Right cardiac atrium (tissue), 5 donors: ENCODE measurements at regions of chr10 and their contacts with region 1.

Region 1: GRCh38 chr10:31133628-31134302 is 102.1 kb upstream of the ZNF438 start:
- DNase-seq: peak; percentile 86 to 96 (median 94)
- ATAC-seq: peak; percentile 94 to 95
- H3K4me3 ChIP-seq: peak overlapping the region; percentile 65
- H3K27ac ChIP-seq: peak overlapping the region; percentile 95
- H3K4me1 ChIP-seq: peaks cover 5% of the 10 kb centered on the region
- H3K27me3 ChIP-seq: no peaks in the 10 kb centered on the region

Region 2: DNA sequence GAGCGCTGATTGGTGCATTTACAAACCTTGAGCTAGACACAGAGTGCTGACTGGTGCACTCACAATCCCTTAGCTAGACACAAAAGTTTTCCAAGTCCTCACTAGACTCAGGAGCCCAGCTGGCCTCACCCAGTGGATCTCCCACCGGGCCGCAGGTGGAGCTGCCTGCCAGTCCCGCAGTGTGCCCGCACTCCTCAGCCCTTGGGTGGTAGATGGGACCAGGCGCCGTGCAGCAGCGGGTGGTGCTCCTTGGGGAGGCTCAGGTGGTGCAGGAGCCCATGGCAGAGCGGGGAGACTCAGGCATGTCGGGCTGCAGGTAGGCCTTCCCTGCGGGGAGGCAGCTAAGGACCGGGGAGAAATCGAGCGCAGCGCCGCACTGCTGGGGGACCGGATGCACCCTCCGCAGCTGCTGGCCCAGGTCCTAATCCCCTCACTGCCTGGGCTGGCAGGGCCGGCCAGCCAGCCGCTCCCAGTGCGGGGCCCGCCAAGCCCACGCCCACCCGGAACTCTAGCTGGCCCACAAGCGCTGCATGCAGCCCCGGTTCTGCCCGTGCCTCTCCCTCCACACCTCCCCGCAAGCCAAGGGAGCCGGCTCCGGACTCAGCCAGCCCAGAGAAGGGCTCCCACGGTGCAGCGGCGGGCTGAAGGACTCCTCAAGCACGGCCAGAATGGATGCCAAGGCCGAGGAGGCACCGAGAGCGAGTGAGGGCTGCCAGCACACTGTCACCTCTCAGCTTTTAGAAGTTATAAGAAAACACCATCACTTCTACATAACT is 231.0 kb before region 1 on chr10:
- intact Hi-C with region 1: no loop called
- DNase-seq: peak; percentile 14 to 55 (median 50)
- ATAC-seq: no peak
- H3K4me3 ChIP-seq: no peak overlapping the region
- H3K27ac ChIP-seq: no peak overlapping the region
- H3K4me1 ChIP-seq: no peaks in the 10 kb centered on the region
- H3K27me3 ChIP-seq: no peaks in the 10 kb centered on the region

Region 3: GRCh38 chr10:31031558-31032257 is 102.1 kb before region 1 on chr10 and contains the start of gene ZNF438:
- intact Hi-C with region 1: loop called in 2 of 4 experiments (anchors 10 kb)
- DNase-seq: peak; percentile 96 to 99 (median 99)
- ATAC-seq: peak; percentile 97 to 98
- H3K4me3 ChIP-seq: peak within 1 kb of the TSS; percentile 51
- H3K27ac ChIP-seq: peak within 1 kb of the TSS; percentile 98
- H3K4me1 ChIP-seq: peaks cover 8% of the 10 kb centered on the region
- H3K27me3 ChIP-seq: no peaks in the 10 kb centered on the region
- total RNA-seq, gene ZNF438: 15.2 to 17.1 (median 15.9) TPM

Region 4: DNA sequence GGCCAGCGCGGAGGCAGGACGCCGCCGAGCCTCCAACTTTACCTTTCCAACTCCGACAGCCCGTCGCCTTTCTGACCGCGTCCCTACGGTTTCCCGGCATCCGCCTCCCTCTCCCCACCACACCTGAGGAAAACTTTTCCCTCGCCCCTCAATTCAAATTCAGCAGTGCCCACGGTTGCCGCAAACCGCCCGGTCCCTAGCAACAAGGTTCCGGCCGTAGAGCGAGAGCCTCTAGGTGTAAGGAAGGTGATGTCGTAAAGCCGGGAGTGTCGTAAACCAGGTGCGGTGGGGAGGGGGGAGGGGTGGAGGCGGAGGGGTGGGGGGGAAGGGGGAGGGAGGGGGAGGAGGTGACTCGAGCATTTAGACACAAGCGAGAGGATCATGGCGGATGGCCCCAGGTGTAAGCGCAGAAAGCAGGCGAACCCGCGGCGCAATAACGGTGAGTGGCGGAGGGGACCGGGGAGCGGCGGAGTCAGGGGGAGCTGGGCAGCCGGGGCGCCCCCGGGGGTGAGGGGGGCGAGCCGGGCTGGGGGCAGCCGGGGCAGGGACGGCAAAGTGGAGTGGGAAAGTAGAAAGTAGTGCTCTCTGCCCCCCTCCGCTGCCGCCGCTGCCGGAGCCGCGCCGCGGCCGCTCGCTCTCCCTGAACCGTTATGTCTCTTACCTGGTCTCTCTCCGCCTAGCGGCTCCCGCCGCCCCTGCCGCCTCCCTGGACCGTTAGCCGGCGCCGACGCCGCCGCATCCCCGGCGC is 185.3 kb after region 1 on chr10 and contains the start of gene ZEB1:
- intact Hi-C with region 1: loop called in 1 of 4 experiments (anchors 10 kb)
- DNase-seq: peak; percentile 90 to 93 (median 91)
- ATAC-seq: peak; percentile 78
- H3K4me3 ChIP-seq: peak within 1 kb of the TSS; percentile 96
- H3K27ac ChIP-seq: peak within 1 kb of the TSS; percentile 100
- H3K4me1 ChIP-seq: no peaks in the 10 kb centered on the region
- H3K27me3 ChIP-seq: no peaks in the 10 kb centered on the region
- total RNA-seq, gene ZEB1: 64.9 to 72.8 (median 69.2) TPM